Dendritic cell treated with granulocyte-macrophage colony-stimulating factor and Interleukin-4, amounts not matched to agents 40 ng/mL and 50 ng/mL, for 4 days (primary cell): ENCODE measurements at regions of chr7 and their contacts with region 1.

Region 1: GRCh38 chr7:155344600-155345433 is 47.1 kb downstream of the INSIG1 start:
- H3K4me3 Mint-ChIP-seq: peak overlapping the region; percentile 25
- H3K27ac Mint-ChIP-seq: no peak overlapping the region
- H3K4me1 Mint-ChIP-seq: no peaks in the 10 kb centered on the region
- H3K27me3 Mint-ChIP-seq: peaks cover 29% of the 10 kb centered on the region

Region 2: DNA sequence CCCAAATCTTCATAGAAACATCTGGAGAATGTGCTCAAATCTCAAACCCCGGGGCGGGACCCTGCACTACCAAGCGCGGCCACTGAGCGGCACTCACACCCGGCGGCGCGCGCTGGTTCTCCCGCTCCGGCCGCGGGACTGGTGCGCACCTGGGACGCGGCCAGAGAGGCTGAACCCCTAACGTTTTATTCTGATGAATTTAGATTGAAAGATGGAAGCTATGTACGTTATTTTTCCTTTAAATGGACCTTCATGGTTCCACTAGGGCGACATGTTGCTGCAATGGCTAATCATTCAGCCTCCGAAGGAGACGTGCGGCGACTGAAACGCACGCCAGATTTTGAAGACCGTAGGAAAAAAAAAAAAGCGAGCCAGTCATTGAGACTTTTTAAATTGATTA is 154.1 kb before region 1 on chr7:
- intact Hi-C with region 1: loop called (anchors 1 kb)
- H3K4me3 Mint-ChIP-seq: no peak overlapping the region
- H3K27ac Mint-ChIP-seq: no peak overlapping the region
- H3K4me1 Mint-ChIP-seq: peaks cover 26% of the 10 kb centered on the region
- H3K27me3 Mint-ChIP-seq: peaks cover 3% of the 10 kb centered on the region

Region 3: GRCh38 chr7:155230168-155230593 is 114.6 kb before region 1 on chr7:
- intact Hi-C with region 1: loop called (anchors 10 kb)
- H3K4me3 Mint-ChIP-seq: no peak overlapping the region
- H3K27ac Mint-ChIP-seq: no peak overlapping the region
- H3K4me1 Mint-ChIP-seq: no peaks in the 10 kb centered on the region
- H3K27me3 Mint-ChIP-seq: peaks cover 19% of the 10 kb centered on the region